Left ventricle myocardium superior (tissue), 1 donor: ENCODE measurements at regions of chr11 and their contacts with region 1.

Region 1: DNA sequence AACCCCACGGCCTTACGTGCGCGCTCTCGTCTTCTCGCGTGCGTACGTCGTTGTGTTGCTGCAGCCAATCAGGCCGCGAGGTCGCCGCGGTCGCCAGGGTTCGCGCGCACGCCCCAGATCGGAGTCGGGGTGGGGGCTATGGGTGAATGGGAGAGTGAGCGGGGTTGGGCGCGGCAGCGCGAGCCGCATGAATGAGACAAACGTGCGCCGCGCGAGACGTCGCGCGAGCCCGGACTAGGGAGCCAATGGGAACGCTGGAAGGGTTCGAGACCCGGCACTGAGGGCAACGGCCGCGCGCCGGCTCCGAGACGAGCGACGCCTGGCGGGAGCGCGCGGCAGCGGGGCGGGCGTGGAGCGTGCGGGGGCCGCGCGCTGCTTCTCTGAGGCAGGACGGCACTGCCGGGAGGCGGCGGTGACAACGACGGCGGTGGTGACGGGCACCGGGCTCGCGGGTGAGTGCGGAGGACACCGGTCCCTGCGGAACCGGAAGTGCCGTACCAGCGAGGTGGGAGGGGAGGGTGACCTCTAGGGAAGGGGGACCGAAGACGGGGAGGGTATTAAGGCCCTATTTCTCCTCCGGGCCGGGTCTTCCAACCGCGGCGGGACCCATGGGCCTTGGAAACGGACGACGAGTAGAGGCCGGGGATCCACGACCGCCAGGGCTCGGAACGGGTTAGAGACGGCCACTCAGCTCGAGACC is at the start of gene ZDHHC5:
- DNase-seq: peak; percentile 100
- ATAC-seq: peak; percentile 95
- total RNA-seq, gene ZDHHC5: 47.8 TPM

Region 2: DNA sequence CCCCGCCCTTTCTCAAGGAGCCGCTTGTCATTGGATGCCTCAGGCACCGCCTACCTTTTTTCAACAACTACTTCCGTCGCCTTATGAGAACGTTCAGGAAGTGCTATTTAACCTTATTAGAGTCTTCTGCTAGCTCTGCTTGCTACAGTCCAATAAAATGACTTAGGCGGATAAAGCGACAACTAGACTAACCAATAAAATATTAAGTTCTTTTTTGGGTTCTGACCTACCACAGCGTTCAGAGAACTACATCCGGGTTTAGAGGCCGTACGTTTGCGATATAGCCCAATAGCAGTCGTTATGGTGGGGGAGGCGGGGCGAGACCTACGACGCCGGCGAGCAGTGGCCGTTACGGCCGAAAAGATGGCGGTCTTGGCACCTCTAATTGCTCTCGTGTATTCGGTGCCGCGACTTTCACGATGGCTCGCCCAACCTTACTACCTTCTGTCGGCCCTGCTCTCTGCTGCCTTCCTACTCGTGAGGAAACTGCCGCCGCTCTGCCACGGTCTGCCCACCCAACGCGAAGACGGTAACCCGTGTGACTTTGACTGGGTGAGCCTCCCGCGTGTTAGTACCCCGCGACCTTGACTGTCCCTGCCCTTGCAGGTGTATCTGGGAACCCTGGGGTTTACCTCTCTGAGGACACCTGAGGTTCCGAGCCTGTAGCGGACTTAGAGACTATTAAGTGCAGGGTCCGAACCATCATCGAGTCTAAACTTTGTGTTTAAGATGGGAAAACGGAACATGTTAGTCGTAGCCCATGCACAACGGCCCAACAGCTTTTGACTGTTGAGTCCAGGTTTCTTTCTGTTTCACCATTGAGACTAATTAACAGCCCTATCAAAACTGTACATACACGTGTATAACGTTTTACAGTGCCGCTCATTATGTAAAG is 44.6 kb after region 1 on chr11 and contains the start of gene TMX2:
- intact Hi-C with region 1: loop called (anchors 2 kb)
- DNase-seq: peak; percentile 94
- ATAC-seq: peak; percentile 97
- total RNA-seq, gene TMX2: 65.6 TPM

Region 3: GRCh38 chr11:57741132-57742086 is 73.5 kb after region 1 on chr11 and contains the start of gene SELENOH:
- intact Hi-C with region 1: loop called (anchors 2 kb)
- DNase-seq: peak; percentile 96
- ATAC-seq: peak; percentile 98
- total RNA-seq, gene SELENOH: 76.8 TPM